Dorsolateral prefrontal cortex (tissue), 120 donors: ENCODE measurements at regions of chr13 and their contacts with region 1.

Region 1: GRCh38 chr13:83876546-83876945 is 5.7 kb downstream of the SLITRK1 start:
- DNase-seq: no peak
- H3K4me3 ChIP-seq: peak overlapping the region in 44 of 59 donors; percentile 3 to 87 (median 72)
- H3K27ac ChIP-seq: peak overlapping the region in 20 of 59 donors; percentile 14 to 95 (median 92)
- H3K27me3 ChIP-seq: peaks cover 0 to 17% (median 0%) of the 10 kb centered on the region in 45 donors
- CTCF ChIP-seq: no peak

Region 2: DNA sequence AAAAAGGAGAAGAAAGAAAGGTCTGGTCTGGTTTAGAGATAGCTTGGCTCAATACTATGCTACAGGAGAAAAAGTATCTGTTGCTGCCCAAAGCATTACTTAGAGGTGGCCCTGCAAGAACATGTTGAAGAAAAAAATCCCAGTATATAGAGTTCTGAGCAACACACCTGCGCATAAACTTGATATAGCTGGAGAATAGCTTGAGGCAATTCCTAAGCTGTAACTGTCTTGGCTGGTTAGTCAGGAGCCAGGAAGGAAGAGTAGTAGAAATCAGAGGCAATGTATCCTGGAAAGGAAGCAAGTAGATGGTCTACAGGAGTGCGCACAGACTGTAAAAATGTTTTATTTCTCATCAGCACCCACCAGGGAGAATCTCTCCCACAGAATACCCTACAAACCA is 203.9 kb before region 1 on chr13:
- intact Hi-C with region 1: no loop called
- DNase-seq: no peak
- H3K4me3 ChIP-seq: no peak overlapping the region
- H3K27ac ChIP-seq: no peak overlapping the region
- H3K27me3 ChIP-seq: no peaks in the 10 kb centered on the region
- CTCF ChIP-seq: no peak

Region 3: DNA sequence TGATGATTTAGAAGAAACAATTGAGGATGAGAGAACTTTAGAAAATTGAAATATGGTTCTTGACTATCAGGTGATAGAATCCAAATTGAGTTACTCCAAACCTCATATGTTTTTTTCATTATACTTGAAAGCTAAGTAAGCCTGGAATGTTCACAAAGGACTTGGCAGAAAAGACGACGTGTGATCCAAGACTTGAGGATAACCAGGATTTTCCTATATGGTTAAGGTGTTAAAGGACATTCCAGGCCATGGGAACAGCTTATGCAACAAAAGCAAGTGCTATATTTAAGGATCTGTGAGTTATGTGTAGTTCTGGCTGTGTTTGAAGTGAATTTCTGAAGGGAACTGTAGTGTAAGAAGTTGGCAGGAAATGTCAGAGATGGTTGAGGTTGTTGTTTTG is 46.7 kb before region 1 on chr13:
- intact Hi-C with region 1: loop called (anchors 5 kb)
- DNase-seq: no peak
- H3K4me3 ChIP-seq: no peak overlapping the region
- H3K27ac ChIP-seq: peak overlapping the region in 9 of 59 donors; percentile 1 to 71 (median 30)
- H3K27me3 ChIP-seq: no peaks in the 10 kb centered on the region
- CTCF ChIP-seq: no peak

Region 4: DNA sequence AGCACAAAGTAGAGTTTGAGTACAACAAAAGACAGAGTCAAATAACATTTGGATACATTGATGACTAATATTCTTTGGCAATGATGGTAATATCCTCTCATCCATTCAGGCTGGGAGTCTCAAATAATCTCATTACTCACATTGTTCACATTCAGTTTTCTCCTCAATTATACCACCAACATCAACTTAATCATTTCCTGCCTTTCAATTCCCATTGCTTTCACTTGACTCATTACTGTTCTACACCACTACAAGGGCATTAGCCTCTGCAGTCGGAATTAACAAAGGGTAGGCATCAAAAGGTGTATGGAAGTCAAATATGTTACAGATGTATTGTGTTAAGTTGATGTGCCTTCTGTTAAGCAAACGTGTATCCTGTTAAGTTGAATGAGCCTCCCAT is 524.2 kb after region 1 on chr13:
- intact Hi-C with region 1: no loop called
- DNase-seq: no peak
- H3K4me3 ChIP-seq: no peak overlapping the region
- H3K27ac ChIP-seq: no peak overlapping the region
- H3K27me3 ChIP-seq: no peaks in the 10 kb centered on the region
- CTCF ChIP-seq: no peak